ENCODE measurements at regions of chr19 and their contacts with region 1.

Region 1: DNA sequence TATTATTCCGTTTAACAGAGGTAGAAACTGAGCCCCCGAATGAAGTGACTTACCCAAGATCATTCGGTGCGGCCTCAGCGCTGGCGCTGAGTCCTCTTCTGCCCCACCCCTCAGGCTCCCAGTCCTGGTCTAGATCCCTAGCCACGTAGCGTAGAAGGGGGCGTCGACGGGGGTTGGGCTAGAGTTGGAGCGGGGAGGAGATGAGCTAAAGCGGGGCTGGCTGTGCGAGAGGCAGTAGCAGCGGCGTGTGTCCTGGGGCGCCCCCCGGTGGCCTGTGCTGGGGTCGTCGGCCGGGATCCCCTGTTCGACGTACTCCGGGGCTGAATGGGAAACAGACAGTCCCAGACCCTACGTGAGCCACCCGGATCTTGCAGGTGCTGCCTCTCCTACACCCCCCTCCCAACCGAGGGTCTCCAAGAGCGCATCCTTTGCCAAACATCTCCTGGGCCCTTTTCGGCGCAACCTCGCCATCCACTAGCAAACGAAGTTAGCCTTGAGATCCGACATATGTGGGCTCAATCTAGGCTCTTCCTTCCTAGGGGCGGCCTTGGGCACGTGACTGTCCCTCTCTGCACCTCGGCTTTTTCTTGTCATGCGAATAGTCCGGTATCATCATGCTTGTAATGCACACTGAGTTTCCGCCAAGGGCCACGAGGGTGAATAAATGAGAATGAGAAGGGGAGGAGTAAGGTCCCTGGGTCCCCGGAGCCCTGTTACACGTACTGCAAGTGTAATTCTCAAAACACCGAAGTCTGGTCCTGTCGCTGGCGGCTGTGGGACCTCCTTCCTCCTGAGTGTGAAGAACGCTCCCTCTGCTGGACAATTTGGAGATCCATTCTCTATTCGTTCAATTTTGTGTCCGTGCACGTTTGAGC is 47.7 kb downstream of the CYP4F22 start:
- DNase-seq: peak; percentile 89 to 98
- H3K4me3 ChIP-seq: peak overlapping the region; percentile 4; the same call in 1 of the 2 replicates
- H3K4me1 ChIP-seq: peaks cover 6% of the 10 kb centered on the region; the same call in 1 of the 2 replicates
- H3K27me3 ChIP-seq: no peaks in the 10 kb centered on the region

Region 2: GRCh38 chr19:15087236-15087635 is 468.8 kb before region 1 on chr19:
- in situ Hi-C with region 1: loop called (anchors 5 kb)
- DNase-seq: no peak
- H3K4me3 ChIP-seq: no peak overlapping the region
- H3K4me1 ChIP-seq: no peaks in the 10 kb centered on the region
- H3K27me3 ChIP-seq: peaks cover 18% of the 10 kb centered on the region

Region 3: GRCh38 chr19:15098515-15098914 is 457.5 kb before region 1 on chr19:
- in situ Hi-C with region 1: no loop called
- DNase-seq: no peak
- H3K4me3 ChIP-seq: no peak overlapping the region
- H3K4me1 ChIP-seq: no peaks in the 10 kb centered on the region
- H3K27me3 ChIP-seq: no peaks in the 10 kb centered on the region

Region 4: DNA sequence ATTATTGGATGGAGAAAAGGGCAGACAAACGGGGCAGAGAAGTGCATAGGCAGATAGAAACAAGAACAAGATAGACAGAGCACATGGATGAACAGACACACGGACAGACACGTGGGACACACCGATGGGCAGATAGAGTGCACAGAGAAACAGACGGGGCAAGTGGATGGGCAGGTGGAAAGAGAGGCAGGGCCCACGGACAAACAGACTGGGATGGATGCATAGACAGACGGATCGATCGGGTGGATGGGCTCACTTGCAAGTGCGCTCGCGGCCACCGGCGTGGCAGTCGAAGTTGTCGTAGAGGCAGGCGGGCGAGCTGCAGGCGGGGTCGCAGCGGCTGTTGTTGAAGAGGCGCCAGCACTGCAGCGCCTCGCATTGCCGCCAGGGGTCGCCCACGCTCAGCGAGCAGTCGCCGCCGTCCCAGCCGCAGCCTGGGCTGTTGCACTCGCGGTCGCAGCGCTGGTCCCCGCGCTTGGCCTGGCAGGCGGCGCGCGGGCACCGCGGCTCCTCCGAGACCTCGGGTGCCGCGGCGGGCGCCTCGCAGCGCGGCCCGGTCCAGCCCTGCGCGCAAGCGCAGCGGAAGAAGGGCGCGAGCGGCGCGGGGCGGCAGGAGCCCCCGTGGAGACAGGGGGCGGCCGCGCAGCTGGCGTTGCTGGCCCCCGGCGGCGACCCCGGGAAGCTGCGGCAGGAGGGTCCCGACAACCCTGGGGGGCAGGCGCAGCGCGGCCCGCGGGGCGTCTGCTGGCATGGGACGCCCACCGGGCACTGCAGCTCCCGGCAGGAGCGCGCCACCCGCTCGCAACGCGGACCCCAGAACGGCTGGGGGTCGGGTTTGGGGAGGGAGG is 378.5 kb before region 1 on chr19:
- in situ Hi-C with region 1: loop called (anchors 5 kb)
- DNase-seq: peak; percentile 81 to 90
- H3K4me3 ChIP-seq: no peak overlapping the region
- H3K4me1 ChIP-seq: peaks cover 2% of the 10 kb centered on the region; the same call in 1 of the 2 replicates
- H3K27me3 ChIP-seq: no peaks in the 10 kb centered on the region

Region 5: DNA sequence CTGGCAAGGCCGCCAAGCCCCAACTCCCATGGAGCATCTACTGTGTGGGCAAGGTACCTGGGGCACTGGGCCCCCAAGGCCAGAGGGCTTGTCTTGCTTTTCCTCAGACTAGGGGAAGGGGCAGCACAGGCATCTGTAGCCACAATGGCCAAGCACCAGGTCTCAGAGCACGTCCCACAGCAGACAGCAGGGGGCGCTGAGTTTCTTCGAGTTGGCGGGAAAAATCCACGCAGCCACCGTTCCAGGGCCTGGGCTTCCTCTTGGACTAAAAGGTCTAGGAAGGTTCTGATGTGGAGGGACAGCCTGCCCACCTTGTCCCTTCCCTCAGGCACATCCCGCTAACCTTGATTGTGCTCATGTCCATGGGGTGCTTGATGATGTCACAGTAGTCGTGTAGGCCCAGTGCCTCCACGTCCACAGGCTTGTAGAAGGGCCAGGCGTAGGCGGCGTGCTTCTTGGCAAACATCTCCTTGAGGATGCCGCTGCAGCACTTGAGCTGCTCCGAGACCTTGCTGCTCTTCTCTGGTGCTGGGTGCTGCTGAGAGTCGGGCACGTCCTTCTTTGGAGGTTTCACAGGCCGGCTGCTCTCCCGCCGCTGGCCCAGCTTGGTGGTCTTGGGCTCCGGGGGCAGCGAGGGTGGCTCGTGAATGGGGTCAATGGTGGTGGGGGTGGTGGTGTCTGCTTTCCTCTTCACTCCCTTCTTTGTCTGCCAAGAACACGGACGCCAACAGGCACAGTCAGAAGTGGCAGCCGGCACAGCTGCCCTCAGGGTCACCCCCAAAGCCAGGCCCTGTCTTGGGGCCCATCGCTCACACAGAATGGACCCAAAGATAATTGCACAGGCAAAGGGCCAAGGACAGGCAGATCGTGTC is 291.7 kb before region 1 on chr19:
- in situ Hi-C with region 1: loop called (anchors 10 kb)
- DNase-seq: peak; percentile 26 to 88
- H3K4me3 ChIP-seq: no peak overlapping the region
- H3K4me1 ChIP-seq: no peaks in the 10 kb centered on the region
- H3K27me3 ChIP-seq: no peaks in the 10 kb centered on the region

Region 6: DNA sequence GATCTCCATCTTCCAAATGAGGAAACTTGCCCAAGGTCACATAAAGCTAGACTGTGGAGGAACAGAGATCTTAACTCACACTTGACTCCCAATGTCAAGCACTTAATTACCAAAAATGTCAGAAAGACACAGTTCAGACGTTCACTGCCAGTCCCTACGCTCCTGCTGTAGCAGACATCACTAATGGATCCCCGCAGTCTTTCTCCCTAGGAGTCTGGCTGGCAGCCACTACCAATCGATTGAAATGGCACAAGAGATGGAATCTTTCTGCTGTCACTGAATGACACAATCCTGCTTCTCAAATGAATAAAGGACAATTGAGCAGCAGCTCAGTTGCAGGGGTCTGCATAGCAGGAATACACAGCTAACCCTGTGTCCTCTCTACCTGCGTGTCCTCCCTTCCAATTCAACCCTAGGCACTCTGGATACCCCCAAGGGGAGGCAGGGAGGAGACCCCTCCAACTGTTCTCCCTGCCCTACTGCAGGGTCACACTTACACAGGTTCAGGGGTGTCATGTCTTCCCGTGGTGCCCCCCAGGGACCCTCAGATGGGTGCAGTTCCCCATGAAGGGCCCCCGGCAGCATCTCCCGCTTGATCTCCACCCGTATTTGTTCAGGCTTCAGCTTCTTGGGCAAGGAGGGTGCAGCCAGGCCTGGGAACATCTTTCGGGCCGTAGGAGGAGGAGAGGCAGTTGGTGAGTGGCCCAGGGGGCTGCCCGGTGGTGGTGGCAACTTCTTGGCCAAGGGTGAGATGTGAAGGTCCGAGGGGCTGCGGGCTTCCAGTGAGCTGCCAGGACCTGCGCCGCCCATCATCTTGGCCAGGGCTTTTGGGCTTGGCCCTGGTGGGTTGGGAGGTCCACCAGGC is 129.3 kb before region 1 on chr19:
- in situ Hi-C with region 1: loop called (anchors 5 kb)
- DNase-seq: no peak
- H3K4me3 ChIP-seq: no peak overlapping the region
- H3K4me1 ChIP-seq: peaks cover 6% of the 10 kb centered on the region; the same call in 1 of the 2 replicates
- H3K27me3 ChIP-seq: no peaks in the 10 kb centered on the region

Region 7: GRCh38 chr19:15479391-15480345 is 76.3 kb before region 1 on chr19 and contains the start of gene PGLYRP2:
- in situ Hi-C with region 1: no loop called
- DNase-seq: no peak
- H3K4me3 ChIP-seq: no peak within 1 kb of the TSS
- H3K4me1 ChIP-seq: no peaks in the 10 kb centered on the region
- H3K27me3 ChIP-seq: no peaks in the 10 kb centered on the region

Region 8: GRCh38 chr19:15869109-15869555 is 313.1 kb after region 1 on chr19:
- in situ Hi-C with region 1: no loop called
- DNase-seq: peak; percentile 37 to 57
- H3K4me3 ChIP-seq: no peak overlapping the region
- H3K4me1 ChIP-seq: no peaks in the 10 kb centered on the region
- H3K27me3 ChIP-seq: no peaks in the 10 kb centered on the region

Region 9: GRCh38 chr19:16052353-16052752 is 496.4 kb after region 1 on chr19:
- in situ Hi-C with region 1: no loop called
- DNase-seq: no peak
- H3K4me3 ChIP-seq: no peak overlapping the region
- H3K4me1 ChIP-seq: no peaks in the 10 kb centered on the region
- H3K27me3 ChIP-seq: no peaks in the 10 kb centered on the region

Measured in HAP-1 (cell line).